ENCODE measurements at regions of chr16 and their contacts with region 1.

Region 1: DNA sequence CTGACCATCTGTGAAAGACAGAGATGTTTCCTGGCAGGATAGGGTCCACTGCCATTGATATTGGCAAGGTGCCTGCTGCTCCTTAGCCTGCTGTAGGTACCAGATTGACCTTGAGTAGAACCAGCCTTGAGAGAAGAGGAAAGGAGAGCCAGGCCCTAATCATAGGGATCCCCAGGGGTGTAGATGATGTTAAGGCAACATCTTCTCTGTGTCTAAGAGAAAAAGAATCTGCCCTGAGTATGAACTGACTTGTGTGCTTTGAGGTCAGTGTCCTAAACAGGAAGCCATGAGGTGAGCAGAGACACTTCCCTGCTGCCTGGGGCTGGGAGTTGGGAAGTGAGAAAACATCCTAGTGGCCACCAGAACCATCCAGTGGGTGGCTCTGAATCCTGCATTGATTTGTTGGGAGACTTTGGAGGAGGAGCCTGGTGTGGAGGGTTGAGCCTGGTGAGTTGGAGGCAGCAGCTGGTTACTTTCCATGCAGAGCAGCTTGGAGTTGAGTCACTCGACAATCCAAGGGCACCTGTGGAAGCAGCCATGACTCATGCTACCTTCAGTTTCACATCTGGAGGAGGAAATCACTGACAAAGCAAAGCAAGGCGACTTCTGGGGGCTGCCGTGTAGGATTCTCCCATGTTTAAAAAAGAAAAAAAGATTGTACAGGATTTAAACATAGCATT is 47.8 kb downstream of the BMERB1 start:
- DNase-seq: peak; percentile 99
- ATAC-seq: peak; percentile 100
- H3K4me3 ChIP-seq: no peak overlapping the region
- H3K27ac ChIP-seq: peak overlapping the region; percentile 84 to 86
- H3K4me1 ChIP-seq: peaks cover 32% of the 10 kb centered on the region
- CTCF ChIP-seq: no peak
- EP300 ChIP-seq: 0 out of 5 replicates have a peak, but pooled peaks of 1 of the 2 experiments have one; percentile 12
- POLR2A ChIP-seq: no peak
- RAD21 ChIP-seq: peak; percentile 44 to 48; a peak in 4 of 5 replicates

Region 2: DNA sequence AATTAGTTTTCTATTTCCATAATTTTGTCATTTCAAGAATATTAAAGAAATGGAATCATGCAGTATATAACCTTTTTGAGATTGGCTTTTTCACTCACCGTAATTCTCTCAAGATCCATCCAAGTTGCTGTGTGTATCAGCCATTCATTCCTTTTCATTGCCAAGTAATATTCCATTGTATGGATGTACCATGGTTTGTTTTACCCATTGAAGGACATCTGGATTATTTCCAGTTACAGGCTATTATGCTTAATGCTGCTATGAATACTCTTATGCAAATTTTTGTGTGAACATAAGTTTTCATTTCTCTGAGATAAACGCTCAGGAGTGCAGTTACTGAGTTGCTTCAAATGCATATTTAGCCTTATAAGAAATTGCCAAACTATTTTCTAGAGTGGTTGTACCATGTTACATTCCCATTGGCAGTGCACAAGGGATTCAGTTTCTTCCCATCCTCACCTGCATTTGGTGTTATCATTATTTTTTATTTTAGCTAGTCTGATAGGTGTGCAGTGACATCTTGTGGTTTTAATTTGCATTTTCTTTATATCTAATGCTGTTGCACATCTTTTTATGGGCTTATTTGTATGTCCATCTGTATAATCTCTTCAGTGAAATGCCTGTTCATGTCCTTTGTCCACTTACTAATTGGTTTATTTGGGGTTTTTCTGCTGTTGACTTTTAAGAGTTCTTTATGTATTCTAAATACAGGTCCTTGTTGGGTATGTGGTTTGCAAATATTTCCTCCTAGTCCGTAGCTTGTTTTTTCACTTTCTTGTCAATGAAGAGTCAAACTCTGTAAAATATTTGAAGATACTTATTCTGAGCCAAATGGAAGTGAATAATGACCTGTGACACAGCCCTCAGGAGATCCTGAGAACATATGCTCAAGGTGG is 15.1 kb before region 1 on chr16:
- CTCF ChIA-PET with region 1: interaction called, 11 read pairs
- POLR2A ChIA-PET with region 1: no interaction called
- DNase-seq: peak in 1 of 2 experiments; percentile 37
- ATAC-seq: no peak
- H3K4me3 ChIP-seq: no peak overlapping the region
- H3K27ac ChIP-seq: no peak overlapping the region
- H3K4me1 ChIP-seq: peaks cover 7% of the 10 kb centered on the region
- CTCF ChIP-seq: peak; percentile 49
- EP300 ChIP-seq: no peak
- POLR2A ChIP-seq: no peak
- RAD21 ChIP-seq: peak; percentile 73 to 76